ENCODE measurements at regions of chr22 and their contacts with region 1.

Region 1: DNA sequence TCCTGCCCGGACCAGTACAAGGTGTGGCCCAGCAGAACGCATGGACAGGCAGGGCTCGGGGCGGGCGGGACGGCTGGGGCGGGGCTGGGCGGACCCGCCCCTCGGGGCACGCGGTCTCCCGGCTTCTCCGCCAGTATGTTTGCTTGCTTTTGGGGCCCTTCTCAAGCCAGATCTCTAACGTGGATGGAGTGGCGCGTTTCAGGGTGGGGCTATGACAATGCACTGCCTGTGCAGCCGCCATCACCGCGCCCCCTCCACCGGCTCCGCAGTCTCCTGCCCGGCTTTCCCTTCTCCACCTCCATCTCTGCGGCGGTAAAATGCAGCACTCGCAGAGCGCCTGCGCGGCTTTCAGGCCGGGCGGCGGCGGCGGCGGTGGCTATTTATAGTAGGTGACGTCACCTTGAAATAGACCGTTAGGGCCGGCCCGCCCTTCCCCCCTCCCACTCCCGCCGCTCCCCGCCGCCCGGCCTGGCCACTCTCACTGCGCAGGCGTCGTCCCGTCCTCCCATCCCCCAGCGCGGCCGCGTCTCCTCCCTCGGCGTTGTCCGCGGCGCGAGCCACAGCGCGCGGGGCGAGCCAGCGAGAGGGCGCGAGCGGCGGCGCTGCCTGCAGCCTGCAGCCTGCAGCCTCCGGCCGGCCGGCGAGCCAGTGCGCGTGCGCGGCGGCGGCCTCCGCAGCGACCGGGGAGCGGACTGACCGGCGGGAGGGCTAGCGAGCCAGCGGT is at the start of gene YWHAH:
- DNase-seq: peak; percentile 99
- CTCF ChIP-seq: no peak

Region 2: GRCh38 chr22:31676700-31677099 is 267.4 kb before region 1 on chr22:
- in situ Hi-C with region 1: loop called (anchors 10 kb)
- DNase-seq: peak; percentile 92
- CTCF ChIP-seq: no peak

Measured in GM13976 (cell line).